WTC11 (cell line): ENCODE measurements at regions of chr14 and their contacts with region 1.

Region 1: GRCh38 chr14:31159682-31160296 is 47.8 kb downstream of the HECTD1 start:
- DNase-seq: no peak
- ATAC-seq: no peak
- H3K4me3 Mint-ChIP-seq: no peak overlapping the region
- H3K27ac Mint-ChIP-seq: no peak overlapping the region
- H3K4me1 Mint-ChIP-seq: no peaks in the 10 kb centered on the region
- H3K27me3 Mint-ChIP-seq: no peaks in the 10 kb centered on the region
- CTCF ChIP-seq: no peak

Region 2: DNA sequence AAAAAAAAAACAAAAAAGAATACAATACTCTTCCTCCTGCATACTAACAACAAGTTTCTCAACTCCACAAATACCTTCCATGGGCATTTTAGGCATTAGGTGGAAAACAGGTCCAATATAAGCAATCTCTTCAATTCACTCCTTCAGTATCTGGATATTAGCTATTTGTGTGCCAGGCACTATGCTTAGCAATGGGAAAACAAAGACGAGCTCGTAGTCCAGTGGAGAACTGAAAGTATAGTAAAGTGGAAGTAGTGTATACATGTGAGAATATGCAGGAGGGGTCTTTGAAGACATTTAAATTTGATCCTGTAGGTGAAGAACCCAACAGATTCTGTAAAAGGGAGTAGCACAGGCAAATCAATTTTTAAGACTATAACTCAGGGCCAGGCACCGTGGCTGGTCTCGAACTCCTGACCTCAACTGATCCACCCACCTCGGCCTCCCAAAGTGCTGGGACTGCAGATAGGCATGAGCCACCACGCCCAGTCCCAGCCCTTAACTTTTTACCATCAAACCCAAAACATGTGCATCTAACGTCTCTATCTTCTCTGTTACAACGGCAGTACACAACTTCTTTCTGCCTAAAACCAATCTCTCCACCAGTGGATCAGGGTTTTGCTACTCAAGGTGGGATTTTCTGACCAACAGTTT is 37.2 kb after region 1 on chr14:
- CTCF ChIA-PET with region 1: no interaction called
- POLR2A ChIA-PET with region 1: interaction called, 12 read pairs
- DNase-seq: no peak
- ATAC-seq: no peak
- H3K4me3 Mint-ChIP-seq: no peak overlapping the region
- H3K27ac Mint-ChIP-seq: peak overlapping the region; percentile 69
- H3K4me1 Mint-ChIP-seq: peaks cover 37% of the 10 kb centered on the region
- H3K27me3 Mint-ChIP-seq: no peaks in the 10 kb centered on the region
- CTCF ChIP-seq: no peak